ENCODE measurements at regions of chr9 and their contacts with region 1.

Region 1: GRCh38 chr9:113446323-113446740 is 17.2 kb upstream of the RGS3 start:
- DNase-seq: no peak
- ATAC-seq: peak; percentile 81 to 92 (median 86)
- H3K4me3 ChIP-seq: no peak overlapping the region
- H3K27ac ChIP-seq: peak overlapping the region in 1 of 3 donors; percentile 25
- H3K4me1 ChIP-seq: peaks cover 0 to 11% (median 3%) of the 10 kb centered on the region in 4 donors
- H3K27me3 ChIP-seq: no peaks in the 10 kb centered on the region
- CTCF ChIP-seq: peak; percentile 51 to 76 (median 70)
- POLR2A ChIP-seq: no peak

Region 2: GRCh38 chr9:113591001-113591898 is 144.9 kb after region 1 on chr9:
- intact Hi-C with region 1: loop called (anchors 5 kb)
- DNase-seq: peak; percentile 81 to 86 (median 83)
- ATAC-seq: peak; percentile 54 to 63 (median 61)
- H3K4me3 ChIP-seq: no peak overlapping the region
- H3K27ac ChIP-seq: peak overlapping the region in 2 of 3 donors; percentile 7 to 22
- H3K4me1 ChIP-seq: peaks cover 0 to 32% (median 9%) of the 10 kb centered on the region in 4 donors
- H3K27me3 ChIP-seq: no peaks in the 10 kb centered on the region
- CTCF ChIP-seq: peak; percentile 88 to 97 (median 94)
- POLR2A ChIP-seq: no peak

Region 3: DNA sequence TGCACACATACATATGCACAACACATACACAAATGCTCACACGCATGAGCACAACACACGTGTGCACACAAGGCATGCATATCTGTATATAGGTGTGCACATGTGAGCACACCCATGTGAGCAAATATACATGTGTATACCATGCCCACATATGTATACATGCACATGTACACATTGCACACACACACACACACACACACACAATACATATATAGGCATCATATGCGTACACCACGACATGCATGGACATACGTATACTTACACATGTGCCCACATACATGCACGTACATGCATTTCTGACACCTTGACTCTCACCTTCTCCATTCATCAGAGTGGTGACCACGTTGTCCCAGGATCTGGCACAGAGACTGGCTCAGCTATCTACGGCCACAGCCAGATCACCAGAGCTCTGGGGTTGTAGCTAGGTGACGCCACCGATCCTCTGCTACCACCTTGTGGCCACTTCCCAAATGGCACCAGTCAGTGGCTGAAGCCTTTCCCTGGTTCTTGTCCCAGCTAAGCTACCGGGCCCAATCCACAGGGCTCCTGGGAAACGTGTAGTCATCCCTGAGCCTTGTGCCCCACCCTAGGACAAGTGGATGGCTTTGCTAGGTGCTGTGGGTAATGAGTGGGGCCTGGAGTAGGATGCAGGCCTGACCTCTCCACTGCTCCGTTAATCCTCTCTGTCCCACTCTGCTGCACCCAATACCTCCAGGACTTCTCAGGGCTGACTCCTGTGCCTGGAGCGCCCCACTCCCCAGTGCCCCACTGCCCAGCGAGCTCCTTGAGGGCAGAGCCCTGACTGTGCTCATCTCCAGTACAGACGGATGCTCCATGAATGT is 211.6 kb after region 1 on chr9:
- intact Hi-C with region 1: loop called (anchors 2 to 10 kb)
- DNase-seq: peak; percentile 84 to 88 (median 84)
- ATAC-seq: peak; percentile 86 to 93 (median 91)
- H3K4me3 ChIP-seq: no peak overlapping the region
- H3K27ac ChIP-seq: no peak overlapping the region
- H3K4me1 ChIP-seq: peaks cover 0 to 14% (median 2%) of the 10 kb centered on the region in 4 donors
- H3K27me3 ChIP-seq: no peaks in the 10 kb centered on the region
- CTCF ChIP-seq: peak; percentile 96 to 98 (median 97)
- POLR2A ChIP-seq: no peak

Region 4: GRCh38 chr9:113669522-113670115 is 223.3 kb after region 1 on chr9:
- intact Hi-C with region 1: loop called in 1 of 2 experiments (anchors 10 kb)
- DNase-seq: no peak
- ATAC-seq: no peak
- H3K4me3 ChIP-seq: no peak overlapping the region
- H3K27ac ChIP-seq: no peak overlapping the region
- H3K4me1 ChIP-seq: no peaks in the 10 kb centered on the region
- H3K27me3 ChIP-seq: no peaks in the 10 kb centered on the region
- CTCF ChIP-seq: no peak
- POLR2A ChIP-seq: no peak

Measured in right lobe of liver (tissue), 6 donors.